CD4-positive, alpha-beta T cell (primary cell): ENCODE measurements at regions of chr2 and their contacts with region 1.

Region 1: GRCh38 chr2:69914170-69914960 is 544 bp upstream of the MXD1 start:
- DNase-seq: peak in 9 of 14 experiments; percentile 13 to 100 (median 100)
- ATAC-seq: peak; percentile 92
- H3K4me3 ChIP-seq: peak overlapping the region; percentile 86
- H3K4me3 Mint-ChIP-seq: peak overlapping the region; percentile 89
- H3K27ac ChIP-seq: peak overlapping the region; percentile 94
- H3K27ac Mint-ChIP-seq: peak overlapping the region; percentile 75
- H3K4me1 ChIP-seq: peaks cover 15% of the 10 kb centered on the region
- H3K4me1 Mint-ChIP-seq: peaks cover 33% of the 10 kb centered on the region
- H3K27me3 ChIP-seq: no peaks in the 10 kb centered on the region
- H3K27me3 Mint-ChIP-seq: no peaks in the 10 kb centered on the region
- CTCF ChIP-seq: no peak

Region 2: GRCh38 chr2:69436938-69437750 is 477.2 kb before region 1 on chr2 and contains the start of gene NFU1:
- CTCF ChIA-PET with region 1: no interaction called
- POLR2A ChIA-PET with region 1: interaction called, 23 read pairs
- intact Hi-C with region 1: no loop called
- DNase-seq: peak; percentile 70 to 95 (median 82)
- ATAC-seq: peak; percentile 77
- H3K4me3 ChIP-seq: peak within 1 kb of the TSS; percentile 81
- H3K4me3 Mint-ChIP-seq: peak within 1 kb of the TSS; percentile 94
- H3K27ac ChIP-seq: peak within 1 kb of the TSS; percentile 87 to 94
- H3K27ac Mint-ChIP-seq: peak within 1 kb of the TSS; percentile 99
- H3K4me1 ChIP-seq: peaks cover 19% of the 10 kb centered on the region
- H3K4me1 Mint-ChIP-seq: peaks cover 44% of the 10 kb centered on the region
- H3K27me3 ChIP-seq: no peaks in the 10 kb centered on the region
- H3K27me3 Mint-ChIP-seq: no peaks in the 10 kb centered on the region
- CTCF ChIP-seq: peak; percentile 25
- total RNA-seq, gene NFU1: 18.5 to 22.2 TPM

Region 3: DNA sequence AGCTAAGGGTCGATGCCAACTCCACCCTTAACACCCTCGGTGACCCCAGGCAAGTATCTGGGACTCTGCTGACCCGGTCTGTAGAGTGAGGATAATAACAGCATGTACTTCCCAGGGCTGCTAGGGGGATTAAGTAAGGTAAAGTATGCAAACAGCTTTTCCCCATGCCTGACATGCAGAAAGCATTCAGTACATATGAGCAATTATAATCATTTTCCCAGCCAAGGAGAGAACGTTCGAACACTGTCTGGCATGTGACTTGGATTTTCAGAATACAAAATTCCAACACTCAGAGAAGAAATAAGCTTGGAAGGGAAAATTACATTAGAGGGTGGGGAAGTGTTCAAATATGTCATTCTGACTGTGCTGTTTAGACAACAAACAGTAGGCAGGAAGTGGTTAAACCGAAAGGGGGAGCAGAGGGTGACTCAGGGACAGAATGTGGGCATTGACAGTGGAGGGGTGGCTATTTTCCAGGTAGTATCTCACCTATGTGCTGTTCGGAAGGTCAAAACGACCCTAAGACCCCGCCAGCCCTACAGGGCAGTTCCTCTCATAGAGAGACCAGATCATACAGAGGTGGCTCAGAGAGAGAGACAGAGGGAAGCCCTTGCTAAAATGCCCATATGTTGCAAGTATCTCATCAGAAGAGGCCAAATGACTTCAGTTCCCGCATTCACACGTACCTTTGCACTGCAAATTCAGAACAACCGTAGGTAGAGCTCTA is 32.1 kb after region 1 on chr2:
- CTCF ChIA-PET with region 1: no interaction called
- POLR2A ChIA-PET with region 1: interaction called, 21 read pairs
- intact Hi-C with region 1: loop called in 1 of 2 experiments (anchors 2 kb)
- DNase-seq: peak; percentile 24 to 87 (median 42)
- ATAC-seq: peak; percentile 93
- H3K4me3 ChIP-seq: peak overlapping the region; percentile 24
- H3K4me3 Mint-ChIP-seq: peak overlapping the region; percentile 3
- H3K27ac ChIP-seq: peak overlapping the region; percentile 3 to 61
- H3K27ac Mint-ChIP-seq: peak overlapping the region; percentile 54
- H3K4me1 ChIP-seq: peaks cover 38% of the 10 kb centered on the region
- H3K4me1 Mint-ChIP-seq: peaks cover 37% of the 10 kb centered on the region
- H3K27me3 ChIP-seq: no peaks in the 10 kb centered on the region
- H3K27me3 Mint-ChIP-seq: no peaks in the 10 kb centered on the region
- CTCF ChIP-seq: no peak

Region 4: DNA sequence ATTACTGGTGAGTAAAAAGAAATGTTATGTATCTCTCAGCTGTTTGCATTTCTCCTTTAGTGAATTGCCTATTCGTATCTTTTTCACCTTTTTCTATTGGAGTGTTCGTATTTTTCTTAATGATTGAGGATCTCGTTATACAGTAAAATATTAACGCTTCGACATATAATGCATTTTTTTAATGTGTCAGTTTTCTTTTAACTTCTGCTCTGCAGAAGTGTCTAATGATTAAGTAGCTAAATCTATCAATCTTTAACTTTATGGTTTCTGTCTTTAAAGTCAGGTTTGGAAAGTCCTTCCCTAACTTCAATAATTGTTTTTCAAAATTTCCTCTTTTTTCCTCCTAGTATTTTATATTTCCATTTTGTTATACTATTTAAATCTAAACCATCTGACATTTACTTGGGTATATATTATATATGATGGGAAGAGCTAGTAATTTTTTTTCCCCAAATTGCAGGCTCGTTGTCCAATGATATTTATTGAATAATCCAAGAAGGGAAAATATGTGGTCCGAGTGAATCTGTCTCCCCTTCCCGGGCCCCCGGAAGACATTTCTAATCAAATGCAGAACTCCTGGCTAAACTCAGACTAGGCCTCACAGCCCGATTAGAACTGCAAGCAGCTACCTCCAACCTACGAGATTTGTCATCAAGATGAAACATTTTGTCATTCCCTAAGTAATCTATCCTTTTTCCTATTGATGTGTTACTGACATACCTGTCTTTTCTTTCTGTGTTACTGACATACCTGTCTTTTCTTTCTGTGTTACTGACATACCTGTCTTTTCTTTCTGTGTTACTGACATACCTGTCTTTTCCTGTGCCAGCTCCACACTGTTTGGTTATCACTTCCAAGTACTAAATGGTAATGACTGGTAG is 190.1 kb after region 1 on chr2:
- CTCF ChIA-PET with region 1: no interaction called
- POLR2A ChIA-PET with region 1: interaction called, 18 read pairs
- intact Hi-C with region 1: no loop called
- DNase-seq: peak in 4 of 14 experiments; percentile 38 to 70 (median 55)
- ATAC-seq: no peak
- H3K4me3 ChIP-seq: peak overlapping the region; percentile 18
- H3K4me3 Mint-ChIP-seq: peak overlapping the region; percentile 83
- H3K27ac ChIP-seq: peak overlapping the region; percentile 66 to 70
- H3K27ac Mint-ChIP-seq: peak overlapping the region; percentile 96
- H3K4me1 ChIP-seq: peaks cover 41% of the 10 kb centered on the region
- H3K4me1 Mint-ChIP-seq: peaks cover 52% of the 10 kb centered on the region
- H3K27me3 ChIP-seq: no peaks in the 10 kb centered on the region
- H3K27me3 Mint-ChIP-seq: no peaks in the 10 kb centered on the region
- CTCF ChIP-seq: no peak

Region 5: DNA sequence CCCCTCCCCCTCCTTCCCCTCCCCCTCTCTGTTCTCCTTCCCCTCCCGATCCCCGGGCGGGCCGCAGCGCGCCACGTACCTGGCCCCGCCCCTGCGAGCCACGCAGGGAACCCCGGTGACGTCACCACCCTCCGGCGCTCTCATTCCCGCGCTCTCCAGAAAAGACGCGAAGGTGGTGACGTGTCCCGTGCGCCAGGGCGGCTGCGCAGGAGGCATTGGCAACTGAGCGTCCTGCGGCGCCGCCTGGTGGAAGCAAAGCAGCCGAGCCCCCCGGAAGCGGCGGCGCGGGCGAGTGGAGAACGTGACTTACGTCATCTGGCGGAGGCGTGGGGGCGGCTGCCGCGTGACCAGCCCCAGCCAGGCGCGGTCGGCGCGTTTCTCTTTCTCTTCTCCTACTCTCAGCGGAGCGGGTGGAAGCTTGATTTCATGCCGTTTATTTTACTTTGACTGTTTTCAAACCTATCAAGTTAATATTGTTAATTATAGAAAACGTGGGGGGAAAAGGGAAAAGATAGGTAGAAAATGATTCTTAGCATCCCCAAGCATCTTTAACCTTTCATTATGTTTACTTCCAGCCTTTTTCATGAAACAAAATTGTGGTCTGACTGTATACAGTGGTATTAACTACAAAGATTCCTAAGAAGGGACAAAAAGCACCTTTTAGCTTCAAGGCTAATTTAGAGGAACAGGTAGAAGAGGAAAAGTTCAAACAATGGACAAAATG is 228.4 kb after region 1 on chr2:
- CTCF ChIA-PET with region 1: interaction called, 55 read pairs
- POLR2A ChIA-PET with region 1: interaction called, 196 read pairs
- intact Hi-C with region 1: loop called (anchors 1 kb)
- DNase-seq: peak; percentile 98 to 100 (median 100)
- ATAC-seq: peak; percentile 74
- H3K4me3 ChIP-seq: peak overlapping the region; percentile 65
- H3K4me3 Mint-ChIP-seq: peak overlapping the region; percentile 99
- H3K27ac ChIP-seq: peak overlapping the region; percentile 97 to 99
- H3K27ac Mint-ChIP-seq: peak overlapping the region; percentile 99
- H3K4me1 ChIP-seq: peaks cover 60% of the 10 kb centered on the region
- H3K4me1 Mint-ChIP-seq: peaks cover 54% of the 10 kb centered on the region
- H3K27me3 ChIP-seq: no peaks in the 10 kb centered on the region
- H3K27me3 Mint-ChIP-seq: no peaks in the 10 kb centered on the region
- CTCF ChIP-seq: peak; percentile 86

Region 6: GRCh38 chr2:70301344-70302194 is 387.2 kb after region 1 on chr2 and contains the start of gene FAM136A:
- CTCF ChIA-PET with region 1: interaction called, 6 read pairs
- POLR2A ChIA-PET with region 1: interaction called, 20 read pairs
- intact Hi-C with region 1: loop called (anchors 1 kb)
- DNase-seq: peak; percentile 78 to 95 (median 86)
- ATAC-seq: peak; percentile 89
- H3K4me3 ChIP-seq: peak within 1 kb of the TSS; percentile 68
- H3K4me3 Mint-ChIP-seq: peak within 1 kb of the TSS; percentile 92
- H3K27ac ChIP-seq: peak within 1 kb of the TSS; percentile 60 to 82
- H3K27ac Mint-ChIP-seq: peak within 1 kb of the TSS; percentile 83
- H3K4me1 ChIP-seq: peaks cover 25% of the 10 kb centered on the region
- H3K4me1 Mint-ChIP-seq: peaks cover 22% of the 10 kb centered on the region
- H3K27me3 ChIP-seq: no peaks in the 10 kb centered on the region
- H3K27me3 Mint-ChIP-seq: no peaks in the 10 kb centered on the region
- CTCF ChIP-seq: peak; percentile 81
- total RNA-seq, gene FAM136A: 30.6 to 31.4 TPM